Calu3 (cell line): ENCODE measurements at regions of chr3 and their contacts with region 1.

Region 1: DNA sequence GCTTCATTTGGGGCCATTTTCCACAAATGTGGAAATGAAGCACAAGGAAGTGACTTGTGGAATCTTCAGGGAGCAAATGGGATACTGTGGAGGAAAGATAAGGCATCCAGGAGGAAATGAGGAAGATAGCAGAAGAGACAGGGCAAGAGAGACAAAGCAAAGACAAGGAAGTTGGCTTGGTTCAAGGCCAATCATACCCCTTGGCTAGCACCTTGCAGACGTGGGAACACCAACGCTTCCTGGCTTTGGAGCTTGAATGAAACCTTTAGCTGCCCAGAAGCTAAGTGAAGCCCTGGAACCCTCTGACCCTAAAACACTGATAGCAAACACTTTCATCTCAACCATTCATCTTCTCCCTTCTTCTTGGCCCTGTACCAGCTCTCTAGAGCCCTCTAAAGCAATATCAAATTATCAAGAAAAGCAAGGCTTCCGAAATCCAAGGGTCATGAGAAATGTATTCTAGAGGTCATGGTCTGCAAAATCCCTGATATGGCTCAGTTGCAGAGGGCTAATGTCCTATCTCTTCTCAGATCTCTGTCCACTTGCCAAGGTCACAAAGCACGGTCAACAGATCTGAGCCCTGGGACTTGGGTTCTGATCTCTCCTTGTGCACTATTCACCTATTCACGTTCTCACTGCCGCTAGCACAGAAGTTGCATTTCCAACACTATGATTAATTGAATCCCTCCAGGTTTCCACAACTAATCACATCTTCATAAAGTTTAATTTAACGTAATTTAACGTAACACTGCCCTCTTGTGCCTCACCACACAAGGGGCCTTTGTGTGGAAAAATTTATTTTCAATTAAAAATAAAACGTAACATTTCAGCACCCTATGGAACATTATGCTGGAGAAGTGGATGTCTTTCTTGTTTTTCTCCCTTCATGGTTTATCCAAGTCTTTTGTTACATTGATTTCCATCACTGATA is 557.6 kb upstream of the ADAMTS9 start:
- DNase-seq: peak; percentile 7
- H3K4me3 Mint-ChIP-seq: no peak overlapping the region
- H3K27ac Mint-ChIP-seq: no peak overlapping the region
- H3K4me1 Mint-ChIP-seq: peaks cover 9% of the 10 kb centered on the region
- H3K27me3 Mint-ChIP-seq: peaks cover 14% of the 10 kb centered on the region
- CTCF ChIP-seq: no peak

Region 2: GRCh38 chr3:64717872-64718613 is 527.4 kb before region 1 on chr3:
- CTCF ChIA-PET with region 1: no interaction called
- intact Hi-C with region 1: loop called (anchors 10 kb)
- DNase-seq: no peak
- H3K4me3 Mint-ChIP-seq: no peak overlapping the region
- H3K27ac Mint-ChIP-seq: no peak overlapping the region
- H3K4me1 Mint-ChIP-seq: no peaks in the 10 kb centered on the region
- H3K27me3 Mint-ChIP-seq: no peaks in the 10 kb centered on the region
- CTCF ChIP-seq: no peak

Region 3: GRCh38 chr3:65126527-65127410 is 118.6 kb before region 1 on chr3:
- CTCF ChIA-PET with region 1: no interaction called
- intact Hi-C with region 1: loop called (anchors 1 kb)
- DNase-seq: no peak
- H3K4me3 Mint-ChIP-seq: no peak overlapping the region
- H3K27ac Mint-ChIP-seq: no peak overlapping the region
- H3K4me1 Mint-ChIP-seq: peaks cover 8% of the 10 kb centered on the region
- H3K27me3 Mint-ChIP-seq: no peaks in the 10 kb centered on the region
- CTCF ChIP-seq: no peak